Prostate gland (tissue), 2 donors: ENCODE measurements at regions of chr11 and their contacts with region 1.

Region 1: DNA sequence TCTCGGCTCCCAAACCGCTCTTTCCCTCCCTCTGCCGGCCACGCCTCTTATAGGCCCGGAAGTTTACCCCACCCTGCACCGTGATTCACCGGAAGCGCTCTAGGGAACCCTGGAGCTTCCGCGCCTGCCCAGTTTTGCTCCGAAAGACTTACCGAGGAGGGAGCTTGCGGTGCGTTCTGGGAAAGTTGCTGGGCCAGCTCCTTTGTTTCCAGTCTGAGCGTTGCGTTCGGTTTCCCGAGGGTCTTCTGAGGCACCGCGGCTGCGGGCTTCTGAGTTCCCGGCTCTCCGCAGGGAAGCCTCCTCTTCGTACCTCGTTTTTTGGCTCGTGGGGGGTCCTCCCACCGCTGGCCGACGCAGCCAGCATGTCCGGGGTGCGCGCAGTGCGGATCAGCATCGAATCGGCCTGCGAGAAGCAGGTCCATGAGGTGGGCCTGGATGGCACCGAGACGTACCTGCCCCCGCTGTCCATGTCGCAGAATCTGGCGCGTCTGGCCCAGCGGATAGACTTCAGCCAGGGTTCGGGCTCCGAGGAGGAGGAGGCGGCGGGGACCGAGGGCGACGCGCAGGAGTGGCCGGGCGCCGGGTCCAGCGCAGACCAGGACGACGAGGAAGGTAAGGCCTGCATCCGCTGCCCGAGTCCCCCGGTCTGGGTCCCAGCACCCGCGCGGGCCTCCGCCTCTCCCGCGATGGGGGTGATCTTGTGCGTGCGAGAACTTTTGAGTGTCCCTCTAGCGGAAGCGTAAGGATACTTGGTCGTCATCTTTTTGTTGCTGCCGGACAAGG is at the start of gene MED17:
- DNase-seq: peak; percentile 92
- H3K4me3 ChIP-seq: peak within 1 kb of the TSS; percentile 86 to 93
- H3K27ac ChIP-seq: peak within 1 kb of the TSS; percentile 92 to 96
- H3K4me1 ChIP-seq: peaks cover 10% of the 10 kb centered on the region
- H3K27me3 ChIP-seq: no peaks in the 10 kb centered on the region
- CTCF ChIP-seq: peak in 3 of 4 experiments; percentile 45 to 65 (median 56)
- POLR2A ChIP-seq: peak; percentile 88
- total RNA-seq, gene MED17: 22.4 to 31.4 TPM

Region 2: DNA sequence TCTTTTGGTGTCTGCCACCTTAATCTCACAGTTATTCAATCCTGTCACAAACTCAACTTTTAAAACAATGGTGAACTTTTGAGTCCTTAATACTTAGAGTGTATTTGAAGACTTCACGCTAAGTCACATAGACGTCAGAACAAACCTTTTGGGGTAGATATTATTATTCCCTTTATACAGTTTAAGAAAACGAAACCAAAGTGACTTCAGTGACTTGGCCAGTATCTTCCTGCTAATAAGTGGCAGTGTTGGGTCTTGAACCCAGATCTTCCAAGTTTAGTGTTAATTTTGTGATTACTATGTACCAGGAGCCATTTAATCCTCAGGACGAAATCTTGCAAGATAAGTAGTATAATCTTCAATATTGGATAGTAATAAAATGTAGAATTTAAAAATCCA is 122.2 kb before region 1 on chr11:
- intact Hi-C with region 1: loop called (anchors 10 kb)
- DNase-seq: no peak
- H3K4me3 ChIP-seq: peak overlapping the region; percentile 77 to 79
- H3K27ac ChIP-seq: peak overlapping the region; percentile 85 to 89
- H3K4me1 ChIP-seq: peaks cover 3% of the 10 kb centered on the region
- H3K27me3 ChIP-seq: no peaks in the 10 kb centered on the region
- CTCF ChIP-seq: no peak
- POLR2A ChIP-seq: no peak

Region 3: DNA sequence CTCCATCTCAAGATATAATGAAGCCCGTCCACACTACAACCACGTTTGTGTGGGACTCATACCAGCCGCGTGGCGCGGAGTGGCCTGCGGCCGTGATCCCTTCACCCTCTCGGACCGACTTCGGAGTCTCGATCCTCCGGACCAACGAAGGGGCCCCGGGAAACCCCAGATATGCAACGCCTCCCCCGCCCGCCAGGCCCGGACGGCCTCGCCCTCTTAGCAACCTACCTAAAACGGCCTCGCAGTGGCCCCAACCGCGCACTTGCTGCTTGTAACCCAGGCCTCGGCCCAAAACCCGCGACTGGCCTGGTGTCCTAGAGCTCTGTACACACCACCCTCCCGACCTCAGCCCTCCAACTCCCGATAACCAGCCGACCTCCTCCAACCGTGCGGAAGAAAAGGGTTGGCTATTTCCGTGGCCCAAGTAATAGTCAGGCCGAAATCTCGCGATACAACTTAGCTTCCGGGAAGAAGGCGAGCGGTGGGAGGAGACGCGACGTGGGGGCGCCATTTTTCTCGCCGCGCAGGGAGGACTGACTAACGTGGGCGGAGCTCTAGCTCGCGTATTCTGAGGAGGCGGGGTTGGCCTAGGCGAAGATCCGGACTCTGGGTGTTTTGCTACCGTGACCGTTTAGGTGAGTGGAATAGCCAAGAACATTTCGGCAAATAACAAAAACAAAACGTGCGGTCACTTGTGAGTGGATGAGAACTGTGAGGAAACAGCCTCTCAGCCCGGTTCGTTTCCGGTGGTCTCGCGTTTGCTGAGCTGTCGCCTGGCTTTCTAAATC is 43.1 kb before region 1 on chr11 and contains the starts of genes C11orf54 and TAF1D:
- intact Hi-C with region 1: loop called (anchors 5 kb)
- DNase-seq: peak; percentile 98
- H3K4me3 ChIP-seq: peak within 1 kb of the TSS; percentile 63 to 73
- H3K27ac ChIP-seq: peak within 1 kb of the TSS; percentile 92
- H3K4me1 ChIP-seq: peaks cover 10% of the 10 kb centered on the region
- H3K27me3 ChIP-seq: no peaks in the 10 kb centered on the region
- CTCF ChIP-seq: peak in 2 of 4 experiments; percentile 3 to 40
- POLR2A ChIP-seq: peak; percentile 58
- total RNA-seq, gene C11orf54: 43.8 to 72.8 TPM
- total RNA-seq, gene TAF1D: 39.3 to 53.0 TPM